CD4-positive, alpha-beta T cell (primary cell): ENCODE measurements at regions of chr5 and their contacts with region 1.

Region 1: DNA sequence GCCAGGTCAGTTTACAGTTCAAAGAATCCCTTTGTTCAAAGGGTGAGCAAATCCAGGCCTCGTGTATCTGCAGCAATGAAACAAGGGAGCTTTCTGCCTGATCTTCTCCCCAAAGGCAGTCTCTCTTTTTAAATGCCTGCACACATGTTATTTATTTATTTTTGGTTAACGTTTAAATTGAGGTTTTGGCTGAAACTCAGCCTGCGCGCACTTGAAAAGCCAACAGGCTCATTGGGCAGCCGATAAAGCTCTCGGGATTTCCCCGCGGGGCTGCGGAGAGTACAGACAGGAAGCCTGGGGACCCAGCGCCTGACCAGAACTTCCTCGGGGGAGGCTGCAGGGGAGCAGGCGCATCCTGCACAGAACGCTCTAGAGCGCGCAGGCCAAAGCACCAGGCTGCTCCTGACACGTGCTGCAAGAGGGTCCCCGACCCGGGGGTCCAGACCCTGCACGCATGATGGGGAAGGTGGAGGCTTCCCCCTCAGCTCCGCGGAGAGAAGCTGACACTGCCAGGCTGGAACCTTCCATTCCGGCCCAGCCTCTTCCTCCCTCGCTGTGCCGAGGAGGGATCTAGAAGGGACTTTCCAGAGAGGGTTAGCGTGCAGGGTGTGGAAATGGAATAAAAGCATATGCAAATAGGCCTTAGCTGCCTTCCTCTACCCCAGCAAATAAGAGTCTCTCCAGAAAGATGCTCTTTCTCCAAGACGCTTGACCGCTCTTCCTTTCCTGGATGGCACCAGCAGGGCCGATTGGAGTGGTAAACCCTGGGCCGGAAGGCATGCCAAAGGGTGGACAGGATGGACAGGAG is 46.1 kb downstream of the PTTG1 start:
- DNase-seq: peak; percentile 37 to 91 (median 60)
- ATAC-seq: peak; percentile 84
- H3K4me3 ChIP-seq: peak overlapping the region; percentile 69
- H3K4me3 Mint-ChIP-seq: peak overlapping the region; percentile 94
- H3K27ac ChIP-seq: peak overlapping the region; percentile 50 to 64
- H3K27ac Mint-ChIP-seq: peak overlapping the region; percentile 88
- H3K4me1 ChIP-seq: peaks cover 44% of the 10 kb centered on the region
- H3K4me1 Mint-ChIP-seq: peaks cover 86% of the 10 kb centered on the region
- H3K27me3 ChIP-seq: no peaks in the 10 kb centered on the region
- H3K27me3 Mint-ChIP-seq: no peaks in the 10 kb centered on the region
- CTCF ChIP-seq: no peak

Region 2: DNA sequence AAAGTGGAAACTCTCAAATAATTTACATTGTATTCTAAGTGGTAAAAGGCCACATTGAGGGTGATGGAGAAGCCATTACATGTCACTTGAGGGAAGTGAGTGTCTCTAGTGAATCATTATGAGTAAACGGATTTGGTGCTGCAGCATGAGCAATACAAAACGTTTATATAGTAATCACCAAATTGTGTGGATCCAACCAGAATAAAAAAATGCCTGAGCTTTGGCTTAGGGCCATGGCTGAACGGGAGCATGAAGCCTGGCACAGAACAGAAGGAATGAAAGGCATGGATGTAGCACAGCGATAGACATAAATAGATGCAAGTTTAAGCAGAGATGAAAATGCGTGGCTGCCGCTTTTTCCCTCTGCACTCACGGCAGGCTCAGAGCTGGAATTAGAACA is 12.2 kb after region 1 on chr5:
- CTCF ChIA-PET with region 1: interaction called, 9 read pairs
- POLR2A ChIA-PET with region 1: interaction called, 23 read pairs
- intact Hi-C with region 1: no loop called
- DNase-seq: no peak
- ATAC-seq: no peak
- H3K4me3 ChIP-seq: no peak overlapping the region
- H3K4me3 Mint-ChIP-seq: peak overlapping the region; percentile 52
- H3K27ac ChIP-seq: no peak overlapping the region
- H3K27ac Mint-ChIP-seq: peak overlapping the region; percentile 88
- H3K4me1 ChIP-seq: peaks cover 52% of the 10 kb centered on the region
- H3K4me1 Mint-ChIP-seq: peaks cover 59% of the 10 kb centered on the region
- H3K27me3 ChIP-seq: no peaks in the 10 kb centered on the region
- H3K27me3 Mint-ChIP-seq: no peaks in the 10 kb centered on the region
- CTCF ChIP-seq: no peak

Region 3: GRCh38 chr5:160508780-160509361 is 41.1 kb after region 1 on chr5:
- CTCF ChIA-PET with region 1: interaction called, 6 read pairs
- POLR2A ChIA-PET with region 1: interaction called, 10 read pairs
- intact Hi-C with region 1: no loop called
- DNase-seq: peak; percentile 22 to 91 (median 48)
- ATAC-seq: peak; percentile 72
- H3K4me3 ChIP-seq: no peak overlapping the region
- H3K4me3 Mint-ChIP-seq: peak overlapping the region; percentile 22
- H3K27ac ChIP-seq: no peak overlapping the region
- H3K27ac Mint-ChIP-seq: peak overlapping the region; percentile 29
- H3K4me1 ChIP-seq: peaks cover 40% of the 10 kb centered on the region
- H3K4me1 Mint-ChIP-seq: peaks cover 28% of the 10 kb centered on the region
- H3K27me3 ChIP-seq: no peaks in the 10 kb centered on the region
- H3K27me3 Mint-ChIP-seq: no peaks in the 10 kb centered on the region
- CTCF ChIP-seq: peak; percentile 83